H1 (cell line): ENCODE measurements at regions of chr15 and their contacts with region 1.

Region 1: GRCh38 chr15:88657326-88658069 is 18.7 kb downstream of the ISG20 start:
- DNase-seq: no peak
- H3K4me3 ChIP-seq: no peak overlapping the region
- H3K27ac ChIP-seq: no peak overlapping the region
- H3K4me1 ChIP-seq: peaks cover 0 to 11% (median 6%) of the 10 kb centered on the region in 4 experiments; a peak in 5 of 7 replicates
- H3K27me3 ChIP-seq: no peaks in the 10 kb centered on the region; a peak in 1 of 7 replicates
- CTCF ChIP-seq: peak; percentile 79 to 88 (median 85)
- EP300 ChIP-seq: no peak
- POLR2A ChIP-seq: no peak
- RAD21 ChIP-seq: peak; percentile 90 to 96

Region 2: DNA sequence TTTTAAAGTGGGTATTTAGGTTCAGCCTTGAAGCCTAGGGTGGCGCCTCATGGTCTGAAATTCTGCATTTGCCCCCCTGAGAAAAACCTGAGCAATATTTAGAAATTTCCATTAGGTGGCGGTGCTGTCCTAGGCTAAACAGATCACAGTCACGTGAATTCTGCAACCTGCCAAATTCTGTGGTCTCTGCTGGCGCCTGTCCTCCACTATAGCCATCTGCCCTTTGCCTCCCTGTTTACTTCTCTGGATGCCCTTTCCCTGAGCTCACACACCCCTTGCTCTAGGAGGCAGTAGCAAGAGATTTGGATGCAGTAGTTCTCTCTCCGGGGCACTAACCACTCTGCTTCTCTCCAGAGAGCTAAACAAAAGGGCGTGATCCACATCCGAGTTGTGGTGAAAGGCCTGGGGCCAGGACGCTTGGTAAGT is 180.8 kb before region 1 on chr15:
- CTCF ChIA-PET with region 1: interaction called, 11 read pairs
- POLR2A ChIA-PET with region 1: no interaction called
- DNase-seq: no peak
- H3K4me3 ChIP-seq: no peak overlapping the region
- H3K27ac ChIP-seq: no peak overlapping the region
- H3K4me1 ChIP-seq: no peaks in the 10 kb centered on the region
- H3K27me3 ChIP-seq: no peaks in the 10 kb centered on the region
- CTCF ChIP-seq: peak; percentile 11 to 81 (median 70)
- EP300 ChIP-seq: no peak
- POLR2A ChIP-seq: no peak
- RAD21 ChIP-seq: peak; percentile 90 to 92

Region 3: DNA sequence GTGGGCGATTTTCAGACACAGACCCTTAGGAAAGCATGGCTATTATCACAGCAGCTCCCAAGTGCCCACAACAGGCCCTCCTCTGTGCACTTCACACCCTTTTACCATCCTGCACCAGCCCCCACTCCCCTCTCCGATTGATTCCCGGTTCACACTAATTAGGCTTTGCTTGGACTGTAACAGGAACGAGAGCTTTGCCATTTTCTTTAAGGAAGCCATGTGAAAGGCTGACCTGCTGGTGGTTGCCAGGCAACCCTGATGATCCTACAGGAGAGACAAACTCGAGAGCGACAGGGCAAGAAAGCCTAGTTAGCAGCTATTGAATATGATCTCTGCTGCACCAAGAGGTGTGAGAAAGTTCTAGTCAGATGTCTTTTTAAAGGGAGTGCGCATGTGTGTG is 82.8 kb before region 1 on chr15:
- CTCF ChIA-PET with region 1: no interaction called
- POLR2A ChIA-PET with region 1: no interaction called
- DNase-seq: no peak
- H3K4me3 ChIP-seq: no peak overlapping the region
- H3K27ac ChIP-seq: no peak overlapping the region
- H3K4me1 ChIP-seq: peaks cover 0 to 5% (median 0%) of the 10 kb centered on the region in 4 experiments; a peak in 1 of 7 replicates
- H3K27me3 ChIP-seq: no peaks in the 10 kb centered on the region
- CTCF ChIP-seq: no peak
- EP300 ChIP-seq: no peak
- POLR2A ChIP-seq: no peak
- RAD21 ChIP-seq: no peak

Region 4: GRCh38 chr15:88680241-88681001 is 22.9 kb after region 1 on chr15:
- CTCF ChIA-PET with region 1: interaction called, 17 read pairs
- POLR2A ChIA-PET with region 1: no interaction called
- DNase-seq: peak in 1 of 2 experiments; percentile 41
- H3K4me3 ChIP-seq: no peak overlapping the region
- H3K27ac ChIP-seq: no peak overlapping the region
- H3K4me1 ChIP-seq: no peaks in the 10 kb centered on the region
- H3K27me3 ChIP-seq: no peaks in the 10 kb centered on the region
- CTCF ChIP-seq: no peak
- EP300 ChIP-seq: no peak
- POLR2A ChIP-seq: no peak
- RAD21 ChIP-seq: no peak; a peak in 1 of 4 replicates

Region 5: DNA sequence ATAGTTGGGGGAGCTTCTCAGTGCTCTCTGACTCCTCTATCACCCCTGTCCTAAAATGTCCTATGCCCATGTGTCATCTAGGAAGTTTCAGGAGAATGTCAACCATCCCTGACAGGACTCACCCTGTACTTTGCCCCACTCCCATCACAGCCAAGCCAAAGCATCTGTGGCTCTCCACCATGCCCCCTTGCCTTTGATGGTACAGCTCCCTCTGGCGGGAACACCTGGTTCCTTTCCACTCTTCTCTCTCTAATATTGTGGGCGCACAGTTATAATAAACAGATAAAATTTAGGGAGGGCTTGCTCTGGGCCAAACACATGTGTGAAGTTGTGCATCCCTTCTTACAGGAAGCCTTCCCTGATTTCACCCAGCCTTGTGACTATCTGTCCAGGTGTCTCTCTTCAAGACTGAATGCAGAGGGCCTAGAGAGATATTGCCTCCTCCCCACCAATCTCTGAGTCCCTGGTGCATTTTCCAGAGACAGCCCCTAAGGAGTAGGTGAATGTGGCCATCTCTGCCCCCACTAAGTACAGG is 44.1 kb after region 1 on chr15:
- CTCF ChIA-PET with region 1: interaction called, 16 read pairs
- POLR2A ChIA-PET with region 1: no interaction called
- DNase-seq: peak in 1 of 2 experiments; percentile 72
- H3K4me3 ChIP-seq: no peak overlapping the region
- H3K27ac ChIP-seq: no peak overlapping the region
- H3K4me1 ChIP-seq: no peaks in the 10 kb centered on the region; a peak in 1 of 7 replicates
- H3K27me3 ChIP-seq: peaks cover 0 to 29% (median 21%) of the 10 kb centered on the region in 4 experiments; a peak in 6 of 7 replicates
- CTCF ChIP-seq: peak; percentile 70 to 74 (median 70)
- EP300 ChIP-seq: no peak
- POLR2A ChIP-seq: no peak
- RAD21 ChIP-seq: peak; percentile 65 to 74

Region 6: DNA sequence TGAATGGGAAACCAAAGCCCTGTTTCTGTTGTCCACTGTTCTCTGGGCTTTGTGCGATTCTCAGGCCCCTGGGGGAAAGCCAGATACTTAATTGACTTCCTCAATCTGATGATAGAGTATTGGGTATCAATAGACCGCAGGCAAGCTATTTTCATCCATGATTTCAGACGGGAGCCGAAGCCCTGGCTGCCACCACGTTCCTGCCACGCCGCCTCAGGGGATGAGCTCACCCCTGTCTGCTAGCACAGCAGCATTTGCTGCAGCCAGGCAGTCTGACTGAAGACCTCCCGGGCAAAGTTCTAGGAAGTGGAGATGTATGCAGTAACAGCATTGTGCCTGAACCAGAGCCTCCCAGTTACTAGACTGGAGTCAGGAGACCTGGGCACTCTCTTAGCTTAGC is 51.2 kb after region 1 on chr15:
- CTCF ChIA-PET with region 1: interaction called, 19 read pairs
- POLR2A ChIA-PET with region 1: no interaction called
- DNase-seq: no peak
- H3K4me3 ChIP-seq: no peak overlapping the region
- H3K27ac ChIP-seq: no peak overlapping the region
- H3K4me1 ChIP-seq: no peaks in the 10 kb centered on the region; a peak in 1 of 7 replicates
- H3K27me3 ChIP-seq: peaks cover 0 to 28% (median 21%) of the 10 kb centered on the region in 4 experiments; a peak in 6 of 7 replicates
- CTCF ChIP-seq: no peak
- EP300 ChIP-seq: no peak
- POLR2A ChIP-seq: no peak
- RAD21 ChIP-seq: no peak

Region 7: GRCh38 chr15:88844749-88845386 is 187.4 kb after region 1 on chr15:
- CTCF ChIA-PET with region 1: interaction called, 14 read pairs
- POLR2A ChIA-PET with region 1: no interaction called
- DNase-seq: no peak
- H3K4me3 ChIP-seq: no peak overlapping the region
- H3K27ac ChIP-seq: no peak overlapping the region
- H3K4me1 ChIP-seq: no peaks in the 10 kb centered on the region; a peak in 1 of 7 replicates
- H3K27me3 ChIP-seq: no peaks in the 10 kb centered on the region
- CTCF ChIP-seq: no peak
- EP300 ChIP-seq: no peak
- POLR2A ChIP-seq: no peak
- RAD21 ChIP-seq: no peak